Activated CD8-positive, alpha-beta T cell treated with anti-CD3 and anti-CD28 coated beads for 36 hours (primary cell): ENCODE measurements at regions of chr3 and their contacts with region 1.

Region 1: DNA sequence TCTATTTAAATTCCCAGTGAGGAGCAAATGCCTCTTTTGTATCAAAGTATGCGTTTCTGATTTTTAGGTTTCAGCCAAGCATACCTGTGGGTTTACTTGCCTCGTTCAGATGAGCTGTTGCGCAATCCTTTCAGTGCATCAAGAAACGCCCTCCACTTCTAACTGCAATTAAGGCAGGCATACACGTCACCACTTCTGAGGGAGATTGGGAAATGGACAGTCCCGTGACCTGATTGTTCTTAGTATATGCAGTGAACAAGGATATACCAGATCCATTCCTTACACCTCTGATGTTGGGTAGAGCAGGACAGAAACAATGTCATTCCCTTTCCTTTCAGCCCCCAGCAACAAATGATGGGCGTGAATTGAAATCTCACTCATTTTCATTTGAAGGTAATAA is 219.0 kb downstream of the ITPR1 start:
- DNase-seq: no peak
- ATAC-seq: no peak
- H3K4me3 Mint-ChIP-seq: no peak overlapping the region
- H3K27ac Mint-ChIP-seq: no peak overlapping the region
- H3K4me1 Mint-ChIP-seq: peaks cover 11% of the 10 kb centered on the region
- H3K27me3 Mint-ChIP-seq: no peaks in the 10 kb centered on the region
- CTCF ChIP-seq: no peak

Region 2: GRCh38 chr3:4730719-4731118 is 18.6 kb after region 1 on chr3:
- CTCF ChIA-PET with region 1: interaction called, 21 read pairs
- POLR2A ChIA-PET with region 1: interaction called, 3 read pairs
- intact Hi-C with region 1: no loop called
- DNase-seq: no peak
- ATAC-seq: no peak
- H3K4me3 Mint-ChIP-seq: no peak overlapping the region
- H3K27ac Mint-ChIP-seq: no peak overlapping the region
- H3K4me1 Mint-ChIP-seq: peaks cover 27% of the 10 kb centered on the region
- H3K27me3 Mint-ChIP-seq: no peaks in the 10 kb centered on the region
- CTCF ChIP-seq: no peak

Region 3: GRCh38 chr3:4765212-4765611 is 53.1 kb after region 1 on chr3:
- CTCF ChIA-PET with region 1: interaction called, 11 read pairs
- POLR2A ChIA-PET with region 1: no interaction called
- intact Hi-C with region 1: no loop called
- DNase-seq: no peak
- ATAC-seq: no peak
- H3K4me3 Mint-ChIP-seq: no peak overlapping the region
- H3K27ac Mint-ChIP-seq: no peak overlapping the region
- H3K4me1 Mint-ChIP-seq: no peaks in the 10 kb centered on the region
- H3K27me3 Mint-ChIP-seq: no peaks in the 10 kb centered on the region
- CTCF ChIP-seq: no peak

Region 4: DNA sequence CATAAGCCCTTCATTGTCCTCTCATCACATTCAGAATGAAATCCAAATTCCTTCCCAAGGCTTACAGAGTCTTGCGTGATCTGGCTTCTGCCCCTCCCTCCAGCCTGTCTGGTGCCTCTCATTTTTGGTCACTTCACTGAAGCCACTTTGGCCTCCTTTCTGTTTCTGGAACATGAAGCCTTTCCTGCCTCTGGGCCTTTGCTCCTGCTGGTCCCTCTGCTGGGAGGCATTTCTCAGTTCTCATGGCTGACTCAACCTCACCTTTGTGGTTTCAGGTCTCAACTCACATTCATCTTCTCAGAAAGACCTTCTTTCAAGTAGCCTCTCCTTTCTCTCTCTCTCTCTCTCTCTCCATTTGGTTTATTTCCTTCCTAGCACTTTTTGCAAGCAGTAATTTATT is 223.2 kb after region 1 on chr3:
- CTCF ChIA-PET with region 1: interaction called, 11 read pairs
- POLR2A ChIA-PET with region 1: no interaction called
- intact Hi-C with region 1: no loop called
- DNase-seq: peak; percentile 51
- ATAC-seq: peak; percentile 78
- H3K4me3 Mint-ChIP-seq: no peak overlapping the region
- H3K27ac Mint-ChIP-seq: peak overlapping the region; percentile 37
- H3K4me1 Mint-ChIP-seq: peaks cover 22% of the 10 kb centered on the region
- H3K27me3 Mint-ChIP-seq: no peaks in the 10 kb centered on the region
- CTCF ChIP-seq: no peak

Region 5: GRCh38 chr3:4994823-4995499 is 282.8 kb after region 1 on chr3:
- CTCF ChIA-PET with region 1: interaction called, 15 read pairs
- POLR2A ChIA-PET with region 1: no interaction called
- intact Hi-C with region 1: no loop called
- DNase-seq: no peak
- ATAC-seq: no peak
- H3K4me3 Mint-ChIP-seq: no peak overlapping the region
- H3K27ac Mint-ChIP-seq: peak overlapping the region; percentile 28
- H3K4me1 Mint-ChIP-seq: peaks cover 25% of the 10 kb centered on the region
- H3K27me3 Mint-ChIP-seq: no peaks in the 10 kb centered on the region
- CTCF ChIP-seq: no peak

Region 6: GRCh38 chr3:5057857-5058324 is 345.7 kb after region 1 on chr3:
- CTCF ChIA-PET with region 1: interaction called, 153 read pairs
- POLR2A ChIA-PET with region 1: no interaction called
- intact Hi-C with region 1: loop called (anchors 1 kb)
- DNase-seq: peak; percentile 93
- ATAC-seq: peak; percentile 95
- H3K4me3 Mint-ChIP-seq: no peak overlapping the region
- H3K27ac Mint-ChIP-seq: no peak overlapping the region
- H3K4me1 Mint-ChIP-seq: peaks cover 32% of the 10 kb centered on the region
- H3K27me3 Mint-ChIP-seq: peaks cover 11% of the 10 kb centered on the region
- CTCF ChIP-seq: peak; percentile 86